MCF 10A (cell line): ENCODE measurements at regions of chr5 and their contacts with region 1.

Region 1: DNA sequence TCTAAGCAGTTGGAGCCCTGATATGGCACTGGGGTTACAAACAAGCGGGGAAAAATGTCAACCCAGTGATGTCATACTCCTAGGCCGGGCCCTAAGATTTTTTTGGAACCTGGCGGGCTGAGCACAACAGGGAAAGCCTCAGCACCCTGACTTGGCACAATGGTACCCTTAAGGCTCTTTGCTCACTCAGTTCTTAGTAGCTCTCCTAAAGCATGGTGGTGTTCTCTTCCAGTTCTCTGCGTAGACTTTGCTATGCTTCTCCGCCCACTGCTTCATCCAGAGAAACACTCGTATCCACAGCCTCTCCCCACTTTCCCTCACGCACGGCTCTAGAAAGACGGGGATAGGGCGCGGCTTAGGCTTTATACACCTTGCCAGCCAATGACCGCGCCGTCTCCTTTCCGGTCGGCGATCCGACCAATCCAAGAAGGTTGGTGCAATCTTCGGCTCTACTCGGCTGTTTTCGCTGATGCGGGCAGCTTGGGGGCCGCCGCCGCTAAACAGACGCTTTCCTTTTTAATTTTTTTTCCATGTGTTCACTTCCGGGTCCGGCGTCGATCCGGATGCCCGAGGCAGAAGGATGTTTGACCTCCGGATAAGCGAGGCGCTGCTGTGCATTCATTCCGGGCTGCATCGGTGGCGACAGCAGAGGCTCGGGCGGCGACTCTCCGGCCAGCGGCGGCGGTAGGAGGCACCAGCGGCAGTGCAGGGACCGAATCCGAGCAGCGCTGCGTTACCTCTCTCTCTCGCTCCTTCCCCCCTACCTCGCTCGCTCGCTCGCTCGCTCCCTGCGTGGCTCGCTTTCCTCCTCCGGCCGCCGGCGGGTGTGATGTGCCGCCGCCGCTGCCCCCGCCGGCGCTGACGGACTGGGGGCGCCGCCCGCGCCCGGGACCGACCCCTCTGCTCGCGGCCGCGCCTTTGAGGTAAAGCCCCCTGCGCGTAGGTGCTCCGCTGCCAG is at the start of gene CSNK1G3:
- DNase-seq: peak; percentile 99
- H3K4me3 Mint-ChIP-seq: peak within 1 kb of the TSS; percentile 91
- H3K27ac Mint-ChIP-seq: peak within 1 kb of the TSS; percentile 97
- H3K4me1 Mint-ChIP-seq: peaks cover 39% of the 10 kb centered on the region
- H3K27me3 Mint-ChIP-seq: no peaks in the 10 kb centered on the region
- CTCF ChIP-seq: no peak
- total RNA-seq, gene CSNK1G3: 92.8 and 110 TPM in 2 replicates

Region 2: GRCh38 chr5:122300374-122300773 is 1211.6 kb before region 1 on chr5:
- CTCF ChIA-PET with region 1: no interaction called
- POLR2A ChIA-PET with region 1: no interaction called
- intact Hi-C with region 1: no loop called
- DNase-seq: no peak
- H3K4me3 Mint-ChIP-seq: no peak overlapping the region
- H3K27ac Mint-ChIP-seq: no peak overlapping the region
- H3K4me1 Mint-ChIP-seq: no peaks in the 10 kb centered on the region
- H3K27me3 Mint-ChIP-seq: no peaks in the 10 kb centered on the region
- CTCF ChIP-seq: no peak

Region 3: GRCh38 chr5:123083298-123083697 is 428.6 kb before region 1 on chr5:
- CTCF ChIA-PET with region 1: no interaction called
- POLR2A ChIA-PET with region 1: no interaction called
- intact Hi-C with region 1: no loop called
- DNase-seq: no peak
- H3K4me3 Mint-ChIP-seq: no peak overlapping the region
- H3K27ac Mint-ChIP-seq: no peak overlapping the region
- H3K4me1 Mint-ChIP-seq: no peaks in the 10 kb centered on the region
- H3K27me3 Mint-ChIP-seq: peaks cover 81% of the 10 kb centered on the region
- CTCF ChIP-seq: no peak

Region 4: DNA sequence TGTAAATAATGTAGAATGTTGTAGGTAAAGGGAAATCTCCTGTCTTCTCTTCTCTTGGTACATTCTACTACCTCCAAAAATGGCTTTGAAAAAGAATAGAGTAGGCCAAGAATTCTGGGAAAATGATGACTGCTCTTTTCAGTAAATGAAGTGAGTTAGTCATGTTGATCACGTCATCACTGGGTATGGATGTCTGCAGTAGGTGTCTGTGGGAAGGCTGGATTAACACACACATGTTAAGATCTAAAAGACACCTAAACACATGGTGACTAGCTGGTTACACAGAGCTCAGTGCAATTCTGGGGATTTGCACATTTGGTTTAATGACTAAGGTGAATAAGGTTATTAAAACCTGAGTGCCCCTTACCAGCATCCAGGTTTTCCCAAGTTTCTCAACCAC is 250.2 kb before region 1 on chr5:
- CTCF ChIA-PET with region 1: no interaction called
- POLR2A ChIA-PET with region 1: no interaction called
- intact Hi-C with region 1: no loop called
- DNase-seq: peak; percentile 56
- H3K4me3 Mint-ChIP-seq: no peak overlapping the region
- H3K27ac Mint-ChIP-seq: no peak overlapping the region
- H3K4me1 Mint-ChIP-seq: peaks cover 6% of the 10 kb centered on the region
- H3K27me3 Mint-ChIP-seq: no peaks in the 10 kb centered on the region
- CTCF ChIP-seq: no peak

Region 5: DNA sequence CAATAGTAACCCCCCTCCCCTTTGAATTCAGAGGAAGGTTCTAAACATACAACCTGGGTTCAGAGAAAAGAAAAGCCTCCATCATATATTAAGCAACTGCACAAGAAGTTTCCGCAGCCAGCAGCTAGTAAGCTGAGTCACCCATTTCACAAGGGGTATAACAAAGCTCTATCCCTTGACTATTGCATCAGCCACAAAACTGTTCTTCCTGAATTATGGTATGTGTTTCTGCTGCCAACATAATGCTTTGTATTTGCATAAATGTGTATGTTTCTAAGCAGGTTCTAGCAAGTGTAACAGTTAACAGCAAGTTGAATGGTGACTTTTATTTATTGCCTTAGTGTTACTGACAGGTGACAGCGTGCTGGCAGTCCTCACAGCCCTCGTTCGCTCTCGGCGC is 81.9 kb before region 1 on chr5:
- CTCF ChIA-PET with region 1: interaction called, 3 read pairs
- POLR2A ChIA-PET with region 1: interaction called, 418 read pairs
- intact Hi-C with region 1: no loop called
- DNase-seq: peak; percentile 99
- H3K4me3 Mint-ChIP-seq: peak overlapping the region; percentile 7
- H3K27ac Mint-ChIP-seq: peak overlapping the region; percentile 75
- H3K4me1 Mint-ChIP-seq: peaks cover 13% of the 10 kb centered on the region
- H3K27me3 Mint-ChIP-seq: no peaks in the 10 kb centered on the region
- CTCF ChIP-seq: no peak

Region 6: GRCh38 chr5:123460296-123460729 is 51.6 kb before region 1 on chr5:
- CTCF ChIA-PET with region 1: no interaction called
- POLR2A ChIA-PET with region 1: interaction called, 17 read pairs
- intact Hi-C with region 1: no loop called
- DNase-seq: peak; percentile 57
- H3K4me3 Mint-ChIP-seq: no peak overlapping the region
- H3K27ac Mint-ChIP-seq: no peak overlapping the region
- H3K4me1 Mint-ChIP-seq: peaks cover 7% of the 10 kb centered on the region
- H3K27me3 Mint-ChIP-seq: no peaks in the 10 kb centered on the region
- CTCF ChIP-seq: no peak

Region 7: GRCh38 chr5:123496892-123497291 is 15.0 kb before region 1 on chr5:
- CTCF ChIA-PET with region 1: interaction called, 4 read pairs
- POLR2A ChIA-PET with region 1: interaction called, 86 read pairs
- intact Hi-C with region 1: no loop called
- DNase-seq: peak; percentile 70
- H3K4me3 Mint-ChIP-seq: peak overlapping the region; percentile 32
- H3K27ac Mint-ChIP-seq: peak overlapping the region; percentile 74
- H3K4me1 Mint-ChIP-seq: peaks cover 23% of the 10 kb centered on the region
- H3K27me3 Mint-ChIP-seq: no peaks in the 10 kb centered on the region
- CTCF ChIP-seq: no peak

Region 8: GRCh38 chr5:123545506-123545905 is 33.6 kb after region 1 on chr5:
- CTCF ChIA-PET with region 1: interaction called, 5 read pairs
- POLR2A ChIA-PET with region 1: interaction called, 40 read pairs
- intact Hi-C with region 1: loop called (anchors 2 kb)
- DNase-seq: peak; percentile 77
- H3K4me3 Mint-ChIP-seq: no peak overlapping the region
- H3K27ac Mint-ChIP-seq: no peak overlapping the region
- H3K4me1 Mint-ChIP-seq: peaks cover 24% of the 10 kb centered on the region
- H3K27me3 Mint-ChIP-seq: no peaks in the 10 kb centered on the region
- CTCF ChIP-seq: peak; percentile 64

Region 9: DNA sequence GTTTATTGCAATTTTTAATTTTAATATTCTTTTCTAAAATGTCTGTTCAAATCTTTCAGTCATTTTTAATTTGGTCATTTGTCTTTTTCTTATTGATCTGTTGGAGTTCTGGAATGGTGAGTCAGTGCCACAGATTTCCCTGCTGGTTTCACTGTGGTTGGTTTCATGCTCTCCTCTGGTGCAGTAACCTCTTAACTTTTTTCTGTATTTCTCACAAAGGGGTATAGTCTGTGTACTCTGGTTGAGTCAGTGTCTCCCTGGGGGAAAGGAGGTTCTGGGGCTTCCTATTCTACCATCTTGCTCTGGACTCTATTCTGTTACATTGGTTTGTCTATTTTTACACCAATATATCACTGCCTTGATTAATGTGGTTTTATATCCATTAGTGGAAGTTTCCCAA is 178.9 kb after region 1 on chr5:
- CTCF ChIA-PET with region 1: no interaction called
- POLR2A ChIA-PET with region 1: no interaction called
- intact Hi-C with region 1: no loop called
- DNase-seq: no peak
- H3K4me3 Mint-ChIP-seq: no peak overlapping the region
- H3K27ac Mint-ChIP-seq: no peak overlapping the region
- H3K4me1 Mint-ChIP-seq: peaks cover 5% of the 10 kb centered on the region
- H3K27me3 Mint-ChIP-seq: no peaks in the 10 kb centered on the region
- CTCF ChIP-seq: no peak